OCI-LY7 (cell line): ENCODE measurements at regions of chr7 and their contacts with region 1.

Region 1: GRCh38 chr7:116524609-116525297 is at the start of gene CAV1:
- DNase-seq: no peak
- H3K4me3 ChIP-seq: peak within 1 kb of the TSS; percentile 24
- H3K27ac ChIP-seq: no peak within 1 kb of the TSS
- H3K4me1 ChIP-seq: no peaks in the 10 kb centered on the region
- CTCF ChIP-seq: no peak
- total RNA-seq, gene CAV1: not detected in 2 replicates

Region 2: GRCh38 chr7:116582806-116583444 is 58.2 kb after region 1 on chr7:
- CTCF ChIA-PET with region 1: no interaction called
- POLR2A ChIA-PET with region 1: no interaction called
- intact Hi-C with region 1: loop called (anchors 5 kb)
- DNase-seq: no peak
- H3K4me3 ChIP-seq: no peak overlapping the region
- H3K27ac ChIP-seq: no peak overlapping the region
- H3K4me1 ChIP-seq: peaks cover 10% of the 10 kb centered on the region
- CTCF ChIP-seq: no peak

Region 3: DNA sequence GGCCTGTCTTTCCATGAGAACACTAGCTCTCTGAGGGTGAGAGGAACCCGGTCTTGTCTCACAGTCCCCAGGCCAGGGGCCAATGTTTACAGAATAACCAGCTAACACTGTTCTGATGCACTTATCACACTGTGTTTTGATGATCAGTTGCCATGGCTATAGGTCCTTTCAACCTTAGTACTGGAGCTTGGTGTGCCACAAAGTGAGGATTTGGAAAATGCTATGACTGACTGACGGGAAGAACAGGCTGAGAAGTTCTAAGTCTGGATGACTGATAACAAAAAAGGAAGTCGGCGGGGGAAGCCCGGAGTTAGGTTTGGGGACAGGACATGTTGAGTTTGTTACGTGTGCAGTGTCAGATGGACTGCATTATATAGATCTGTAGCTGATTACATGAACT is 1206.7 kb after region 1 on chr7:
- CTCF ChIA-PET with region 1: no interaction called
- POLR2A ChIA-PET with region 1: no interaction called
- intact Hi-C with region 1: no loop called
- DNase-seq: no peak
- H3K4me3 ChIP-seq: no peak overlapping the region
- H3K27ac ChIP-seq: no peak overlapping the region
- H3K4me1 ChIP-seq: no peaks in the 10 kb centered on the region
- CTCF ChIP-seq: no peak